PC-9 (cell line): ENCODE measurements at regions of chr7 and their contacts with region 1.

Region 1: DNA sequence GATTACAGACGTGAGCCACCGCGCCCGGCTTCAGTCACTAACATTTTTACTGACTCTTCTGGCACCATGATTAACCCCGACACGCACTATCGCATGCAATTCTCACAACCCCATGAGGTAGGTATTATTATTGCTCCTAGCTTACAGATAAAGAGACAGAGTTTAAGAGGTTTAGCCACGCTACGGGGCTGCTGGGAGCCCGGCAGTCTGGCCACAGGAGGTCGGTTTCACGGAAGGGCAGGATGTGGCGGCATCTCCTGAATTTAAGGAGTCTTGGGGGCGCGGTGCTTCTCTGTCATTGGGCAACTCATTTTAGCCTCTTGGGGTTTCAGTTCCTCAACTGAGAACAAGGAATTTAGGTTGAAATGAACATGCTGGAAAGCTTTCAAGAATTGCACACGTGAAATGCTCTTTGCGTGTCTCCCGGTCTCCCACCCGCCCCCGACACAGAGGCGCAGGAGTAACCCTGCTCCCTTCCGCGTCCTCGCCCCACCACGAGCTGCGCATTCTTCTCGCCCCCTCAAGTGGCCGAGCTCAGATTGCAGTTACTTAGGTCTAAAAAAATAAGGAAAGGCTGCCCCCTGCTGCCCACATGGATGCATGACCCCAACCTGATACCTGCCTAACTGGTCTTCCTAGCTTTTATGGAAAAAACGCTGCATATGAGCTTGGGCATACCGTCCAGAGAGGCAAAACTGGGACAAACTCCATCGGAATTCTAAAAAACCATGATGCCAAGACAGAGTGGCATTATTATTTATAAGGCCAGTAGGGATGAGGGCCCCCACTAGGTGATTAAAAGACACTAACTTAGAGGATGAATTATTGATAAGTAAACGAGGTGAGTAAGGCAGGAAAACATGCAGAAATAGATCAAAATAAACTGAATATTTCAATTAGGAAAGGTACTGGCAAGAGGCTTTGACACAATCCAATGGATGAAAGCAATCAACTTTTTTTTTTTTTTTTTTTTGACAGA is 12.4 kb downstream of the PRSS2 start:
- DNase-seq: peak; percentile 88 to 93
- H3K4me3 ChIP-seq: peak overlapping the region; percentile 41; the same call in 1 of the 2 replicates
- H3K27ac ChIP-seq: no peak overlapping the region
- H3K4me1 ChIP-seq: peaks cover 10% of the 10 kb centered on the region
- H3K27me3 ChIP-seq: no peaks in the 10 kb centered on the region
- CTCF ChIP-seq: peak; percentile 99

Region 2: DNA sequence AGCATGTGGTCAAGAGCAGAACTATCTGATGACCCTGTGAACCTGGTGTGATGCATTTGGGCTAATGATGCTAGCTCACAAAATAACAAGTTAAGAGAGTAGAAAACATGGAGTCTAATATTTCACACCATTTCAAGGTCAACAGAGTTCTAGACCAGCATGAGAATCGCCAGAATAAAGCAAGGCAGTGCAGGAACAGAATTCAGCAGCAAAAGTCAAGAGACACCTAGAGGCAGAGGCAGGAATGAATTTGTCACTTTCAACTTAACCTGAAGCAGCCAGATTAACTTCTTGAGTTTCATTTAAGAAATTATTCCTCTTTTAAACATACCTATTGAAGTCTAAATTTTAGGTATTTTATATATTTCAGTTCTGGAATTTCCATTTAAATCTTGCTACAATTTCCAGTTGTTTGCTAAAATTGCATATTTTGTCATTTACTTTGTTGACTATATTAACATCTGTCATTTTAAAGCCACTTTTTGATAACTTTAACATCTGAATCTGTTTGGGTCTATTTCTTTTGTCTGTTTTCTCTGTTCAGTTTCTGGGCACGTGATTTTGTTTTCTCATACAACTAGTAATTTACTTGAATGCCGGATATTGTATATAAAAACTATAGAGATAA is 481.2 kb before region 1 on chr7:
- CTCF ChIA-PET with region 1: no interaction called
- POLR2A ChIA-PET with region 1: no interaction called
- intact Hi-C with region 1: loop called (anchors 1 kb)
- DNase-seq: no peak
- H3K4me3 ChIP-seq: no peak overlapping the region
- H3K27ac ChIP-seq: no peak overlapping the region
- H3K4me1 ChIP-seq: no peaks in the 10 kb centered on the region
- H3K27me3 ChIP-seq: no peaks in the 10 kb centered on the region
- CTCF ChIP-seq: 0 out of 2 replicates have a peak, but pooled peaks have one; percentile 35

Region 3: GRCh38 chr7:142391191-142391992 is 391.8 kb before region 1 on chr7:
- CTCF ChIA-PET with region 1: interaction called, 15 read pairs
- POLR2A ChIA-PET with region 1: no interaction called
- intact Hi-C with region 1: loop called (anchors 1 kb)
- DNase-seq: peak in 1 of 2 experiments; percentile 52
- H3K4me3 ChIP-seq: no peak overlapping the region
- H3K27ac ChIP-seq: no peak overlapping the region
- H3K4me1 ChIP-seq: 0 out of 2 replicates have a peak, but pooled peaks cover 4% of the 10 kb centered on the region
- H3K27me3 ChIP-seq: no peaks in the 10 kb centered on the region
- CTCF ChIP-seq: peak; percentile 58

Region 4: DNA sequence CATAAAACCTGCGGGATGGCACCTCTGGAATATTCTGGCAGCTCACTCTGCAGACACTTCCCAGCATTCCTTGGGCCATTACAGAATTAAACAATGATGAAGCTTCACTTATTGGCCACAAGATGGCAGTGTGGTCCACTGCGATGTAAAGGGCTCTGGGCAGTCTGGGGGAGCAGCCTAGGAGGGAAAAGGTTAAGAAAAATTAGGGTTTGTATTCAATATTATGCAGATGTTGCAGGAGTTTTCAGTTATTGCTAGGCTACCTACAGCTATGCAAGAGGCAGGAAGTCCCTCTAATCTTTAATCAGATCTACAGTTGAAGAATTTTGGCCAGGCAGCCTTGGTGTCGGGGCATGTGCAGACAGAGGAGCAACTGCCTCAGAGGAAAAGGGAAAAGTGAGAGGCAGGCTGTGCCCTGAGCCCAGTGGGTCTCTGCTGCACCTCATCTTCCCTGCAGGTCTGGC is 267.1 kb before region 1 on chr7:
- CTCF ChIA-PET with region 1: interaction called, 9 read pairs
- POLR2A ChIA-PET with region 1: no interaction called
- intact Hi-C with region 1: loop called (anchors 1 kb)
- DNase-seq: peak; percentile 72 to 87
- H3K4me3 ChIP-seq: no peak overlapping the region
- H3K27ac ChIP-seq: peak overlapping the region; percentile 79
- H3K4me1 ChIP-seq: peaks cover 48% of the 10 kb centered on the region
- H3K27me3 ChIP-seq: no peaks in the 10 kb centered on the region
- CTCF ChIP-seq: peak; percentile 97

Region 5: DNA sequence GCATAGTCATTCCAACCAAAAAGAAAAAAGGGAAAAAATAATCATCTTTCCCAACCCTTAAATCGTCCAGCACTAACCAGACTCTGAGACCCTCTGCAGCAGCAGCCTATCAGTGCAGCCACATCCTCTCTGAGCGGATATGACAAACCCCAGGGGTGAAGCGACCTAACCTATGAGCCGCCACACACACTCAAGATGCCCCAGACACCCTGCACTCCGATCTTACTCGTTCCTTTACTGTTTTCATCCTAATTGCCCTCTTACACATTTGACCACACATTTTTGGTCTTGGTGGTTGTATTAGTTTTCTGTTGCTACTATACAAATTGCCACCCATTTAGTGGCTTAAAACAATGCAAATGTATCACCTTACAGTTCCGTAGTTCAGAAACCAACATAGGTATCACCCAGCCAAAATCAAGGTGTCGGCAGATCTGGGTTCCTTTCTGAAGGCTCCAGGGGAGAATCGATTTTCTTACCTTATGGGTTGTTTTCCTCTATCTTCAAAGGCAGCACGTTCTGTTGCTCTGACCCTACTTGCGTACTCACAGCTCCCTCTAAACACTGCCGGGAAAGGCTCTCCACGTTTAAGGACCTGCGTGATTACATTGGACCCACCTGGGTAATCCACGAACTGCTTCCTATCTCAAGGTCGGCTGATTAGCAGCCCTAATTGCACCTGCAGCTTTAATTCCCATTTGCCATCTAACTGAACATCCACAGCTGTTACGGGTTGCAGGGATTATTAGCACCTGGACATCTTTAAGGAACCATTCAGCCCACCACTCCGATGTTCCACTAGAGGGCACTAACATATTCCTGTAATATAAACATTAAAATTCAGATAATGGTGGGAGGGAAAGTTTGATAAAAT is 71.2 kb before region 1 on chr7:
- CTCF ChIA-PET with region 1: interaction called, 5 read pairs
- POLR2A ChIA-PET with region 1: no interaction called
- intact Hi-C with region 1: loop called (anchors 1 kb)
- DNase-seq: peak in 1 of 2 experiments; percentile 54
- H3K4me3 ChIP-seq: no peak overlapping the region
- H3K27ac ChIP-seq: no peak overlapping the region
- H3K4me1 ChIP-seq: no peaks in the 10 kb centered on the region
- H3K27me3 ChIP-seq: no peaks in the 10 kb centered on the region
- CTCF ChIP-seq: peak; percentile 88

Region 6: GRCh38 chr7:142866361-142867058 is 83.3 kb after region 1 on chr7:
- CTCF ChIA-PET with region 1: interaction called, 13 read pairs
- POLR2A ChIA-PET with region 1: no interaction called
- intact Hi-C with region 1: no loop called
- DNase-seq: peak; percentile 36 to 59
- H3K4me3 ChIP-seq: no peak overlapping the region
- H3K27ac ChIP-seq: no peak overlapping the region
- H3K4me1 ChIP-seq: no peaks in the 10 kb centered on the region
- H3K27me3 ChIP-seq: no peaks in the 10 kb centered on the region
- CTCF ChIP-seq: peak; percentile 83